PC-9 (cell line): ENCODE measurements at regions of chr2 and their contacts with region 1.

Region 1: GRCh38 chr2:222969491-222969890 is 82.5 kb upstream of the KCNE4 start:
- DNase-seq: peak in 1 of 2 experiments; percentile 61
- H3K4me3 ChIP-seq: no peak overlapping the region
- H3K27ac ChIP-seq: no peak overlapping the region
- H3K4me1 ChIP-seq: peaks cover 18% of the 10 kb centered on the region
- H3K27me3 ChIP-seq: no peaks in the 10 kb centered on the region
- CTCF ChIP-seq: no peak

Region 2: GRCh38 chr2:222912117-222912516 is 57.4 kb before region 1 on chr2:
- CTCF ChIA-PET with region 1: no interaction called
- POLR2A ChIA-PET with region 1: no interaction called
- intact Hi-C with region 1: loop called (anchors 2 kb)
- DNase-seq: no peak
- H3K4me3 ChIP-seq: no peak overlapping the region
- H3K27ac ChIP-seq: peak overlapping the region; percentile 21; the same call in 1 of the 2 replicates
- H3K4me1 ChIP-seq: 0 out of 2 replicates have a peak, but pooled peaks cover 5% of the 10 kb centered on the region
- H3K27me3 ChIP-seq: no peaks in the 10 kb centered on the region
- CTCF ChIP-seq: no peak

Region 3: GRCh38 chr2:222939208-222939856 is 30.2 kb before region 1 on chr2:
- CTCF ChIA-PET with region 1: interaction called, 5 read pairs
- POLR2A ChIA-PET with region 1: interaction called, 11 read pairs
- intact Hi-C with region 1: no loop called
- DNase-seq: peak; percentile 69 to 81
- H3K4me3 ChIP-seq: no peak overlapping the region
- H3K27ac ChIP-seq: peak overlapping the region; percentile 0; the same call in 1 of the 2 replicates
- H3K4me1 ChIP-seq: peaks cover 33% of the 10 kb centered on the region
- H3K27me3 ChIP-seq: no peaks in the 10 kb centered on the region
- CTCF ChIP-seq: peak; percentile 99

Region 4: GRCh38 chr2:223247136-223247535 is 277.6 kb after region 1 on chr2:
- CTCF ChIA-PET with region 1: interaction called, 4 read pairs
- POLR2A ChIA-PET with region 1: no interaction called
- intact Hi-C with region 1: loop called (anchors 2 kb)
- DNase-seq: peak in 1 of 2 experiments; percentile 47
- H3K4me3 ChIP-seq: no peak overlapping the region
- H3K27ac ChIP-seq: no peak overlapping the region
- H3K4me1 ChIP-seq: no peaks in the 10 kb centered on the region
- H3K27me3 ChIP-seq: no peaks in the 10 kb centered on the region
- CTCF ChIP-seq: peak; percentile 93

Region 5: GRCh38 chr2:223580951-223581350 is 611.5 kb after region 1 on chr2:
- CTCF ChIA-PET with region 1: interaction called, 14 read pairs
- POLR2A ChIA-PET with region 1: no interaction called
- intact Hi-C with region 1: no loop called
- DNase-seq: no peak
- H3K4me3 ChIP-seq: no peak overlapping the region
- H3K27ac ChIP-seq: no peak overlapping the region
- H3K4me1 ChIP-seq: peaks cover 15% of the 10 kb centered on the region
- H3K27me3 ChIP-seq: no peaks in the 10 kb centered on the region
- CTCF ChIP-seq: no peak